Activated B cell treated with CpG ODN at 0.5 μM for 24 hours (primary cell): ENCODE measurements at regions of chr2 and their contacts with region 1.

Region 1: DNA sequence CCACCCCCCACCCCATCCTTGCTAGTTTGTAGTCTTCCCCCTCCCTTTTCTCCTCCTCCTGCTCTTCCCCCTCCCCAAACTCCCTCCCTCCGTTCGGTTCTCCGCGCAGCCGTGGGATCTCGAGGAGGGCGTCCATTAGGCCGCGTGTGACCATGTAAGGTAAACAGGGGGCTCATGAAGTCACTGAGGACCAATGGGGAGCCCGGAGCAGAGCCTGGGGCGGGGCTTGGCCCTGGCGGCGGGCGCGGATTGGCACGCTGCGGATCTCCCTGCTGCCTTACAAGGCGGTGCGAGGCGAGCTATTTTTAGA is 246 bp upstream of the KLF7 start:
- DNase-seq: peak; percentile 88
- ATAC-seq: peak; percentile 89
- H3K4me3 Mint-ChIP-seq: peak overlapping the region; percentile 95
- H3K27ac Mint-ChIP-seq: peak overlapping the region; percentile 95
- H3K4me1 Mint-ChIP-seq: peaks cover 63% of the 10 kb centered on the region
- H3K27me3 Mint-ChIP-seq: no peaks in the 10 kb centered on the region
- CTCF ChIP-seq: no peak

Region 2: DNA sequence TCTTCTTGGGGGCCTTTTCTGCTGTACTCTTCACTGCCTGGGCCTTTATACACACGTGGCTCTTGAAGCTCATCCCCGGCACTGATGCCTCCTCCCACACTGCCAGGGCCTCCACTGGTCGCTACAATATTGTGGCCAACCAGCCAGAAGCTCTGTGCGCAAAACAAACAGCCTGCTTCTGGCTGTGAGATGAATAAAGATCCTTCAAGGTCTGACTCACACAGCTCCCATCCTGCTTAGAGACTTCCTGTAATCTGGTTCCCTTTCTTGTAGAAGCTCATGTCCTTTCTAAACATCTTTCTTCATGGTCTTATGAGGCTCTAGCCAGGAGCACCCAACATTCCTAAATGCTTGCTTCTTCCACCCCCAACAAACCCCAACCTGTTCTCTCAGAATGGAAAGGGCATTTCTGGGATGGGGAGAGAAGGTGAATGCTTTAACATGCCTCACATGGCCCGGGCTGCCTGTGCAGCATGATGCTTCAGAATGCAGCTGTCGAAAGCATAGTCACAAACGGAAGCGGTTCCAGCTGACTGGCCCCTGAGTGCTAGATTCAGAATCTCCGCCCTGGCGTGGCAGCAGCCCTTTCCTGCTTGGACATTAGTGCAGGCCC is 1459.1 kb before region 1 on chr2:
- CTCF ChIA-PET with region 1: no interaction called
- POLR2A ChIA-PET with region 1: interaction called, 5 read pairs
- intact Hi-C with region 1: loop called (anchors 10 kb)
- DNase-seq: peak; percentile 60
- ATAC-seq: peak; percentile 95
- H3K4me3 Mint-ChIP-seq: peak overlapping the region; percentile 65
- H3K27ac Mint-ChIP-seq: peak overlapping the region; percentile 99
- H3K4me1 Mint-ChIP-seq: peaks cover 63% of the 10 kb centered on the region
- H3K27me3 Mint-ChIP-seq: no peaks in the 10 kb centered on the region
- CTCF ChIP-seq: no peak

Region 3: GRCh38 chr2:206765242-206766056 is 400.5 kb before region 1 on chr2 and contains the starts of genes FASTKD2 and MDH1B:
- CTCF ChIA-PET with region 1: no interaction called
- POLR2A ChIA-PET with region 1: interaction called, 18 read pairs
- intact Hi-C with region 1: loop called (anchors 1 kb)
- DNase-seq: peak; percentile 77
- ATAC-seq: peak; percentile 87
- H3K4me3 Mint-ChIP-seq: peak within 1 kb of the TSS; percentile 94
- H3K27ac Mint-ChIP-seq: peak within 1 kb of the TSS; percentile 96
- H3K4me1 Mint-ChIP-seq: peaks cover 34% of the 10 kb centered on the region
- H3K27me3 Mint-ChIP-seq: peaks cover 3% of the 10 kb centered on the region
- CTCF ChIP-seq: no peak
- total RNA-seq, gene FASTKD2: 29.1 and 29.6 TPM in 2 replicates
- total RNA-seq, gene MDH1B: not detected in 2 replicates

Region 4: DNA sequence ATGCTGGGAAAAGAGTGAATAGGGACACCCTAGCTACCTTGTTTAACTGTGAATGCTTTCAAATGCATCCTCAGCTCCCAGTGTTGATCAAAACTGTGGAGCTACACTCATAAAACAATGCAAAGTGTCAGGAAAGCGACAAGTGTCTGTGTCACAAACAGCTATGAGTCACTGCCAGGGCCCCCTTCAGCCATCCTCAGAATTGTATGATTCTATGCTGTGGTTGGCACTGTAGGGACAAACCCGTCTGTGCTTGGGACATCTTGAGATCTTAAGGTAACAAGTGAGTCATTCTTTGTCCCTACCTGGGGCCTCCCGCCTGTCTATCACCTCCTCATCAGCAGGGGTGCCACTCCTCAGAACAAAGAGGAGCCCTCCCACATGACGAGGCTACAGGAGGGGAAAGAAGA is 42.7 kb before region 1 on chr2:
- CTCF ChIA-PET with region 1: interaction called, 3 read pairs
- POLR2A ChIA-PET with region 1: interaction called, 12 read pairs
- intact Hi-C with region 1: no loop called
- DNase-seq: no peak
- ATAC-seq: peak; percentile 21
- H3K4me3 Mint-ChIP-seq: no peak overlapping the region
- H3K27ac Mint-ChIP-seq: no peak overlapping the region
- H3K4me1 Mint-ChIP-seq: peaks cover 52% of the 10 kb centered on the region
- H3K27me3 Mint-ChIP-seq: no peaks in the 10 kb centered on the region
- CTCF ChIP-seq: no peak

Region 5: DNA sequence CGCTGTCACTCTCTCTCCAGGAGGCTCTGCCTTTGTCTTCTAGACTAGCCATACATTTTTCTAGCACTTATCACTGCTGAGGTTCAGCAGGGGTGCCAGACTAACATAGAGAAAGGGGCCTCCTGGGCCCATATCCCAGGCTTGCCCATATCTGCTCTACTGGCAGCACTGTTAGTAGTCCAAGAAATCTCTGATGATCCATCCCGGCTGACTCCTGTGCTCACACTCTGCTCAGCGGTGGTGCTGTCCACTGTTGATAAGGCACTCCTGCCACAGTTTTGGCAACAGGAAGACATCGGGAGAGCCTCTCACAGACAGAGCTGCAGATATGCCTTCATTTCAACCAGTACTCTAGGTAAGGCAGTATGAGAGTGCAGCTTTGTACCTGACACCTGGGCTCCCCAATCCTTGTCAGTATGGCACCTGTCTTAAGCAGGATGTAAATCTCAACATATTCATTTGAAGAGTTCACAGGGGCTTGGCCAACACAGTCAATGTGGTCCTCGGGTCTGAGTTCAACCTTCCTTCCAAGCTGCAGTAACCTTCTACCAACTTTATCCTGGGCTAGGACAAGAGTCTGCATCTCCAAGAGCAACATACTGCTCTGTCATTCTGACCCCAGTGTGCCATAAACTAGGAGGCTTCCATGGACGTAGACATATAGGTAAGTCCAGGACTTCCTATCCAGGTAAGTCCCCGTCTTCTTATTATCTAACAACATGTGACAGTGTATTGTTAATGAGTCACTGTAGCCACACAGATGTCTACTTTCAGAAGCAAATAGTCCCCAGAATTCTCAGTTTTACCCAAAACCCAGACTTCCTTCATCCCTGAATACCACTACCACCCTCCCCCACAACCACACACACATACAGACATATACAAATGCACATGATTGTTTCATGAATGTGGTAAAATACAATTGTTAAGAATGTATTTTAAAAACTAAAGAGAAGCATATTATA is 16.5 kb before region 1 on chr2:
- CTCF ChIA-PET with region 1: interaction called, 3 read pairs
- POLR2A ChIA-PET with region 1: interaction called, 202 read pairs
- intact Hi-C with region 1: no loop called
- DNase-seq: no peak
- ATAC-seq: peak; percentile 25
- H3K4me3 Mint-ChIP-seq: peak overlapping the region; percentile 49
- H3K27ac Mint-ChIP-seq: peak overlapping the region; percentile 62
- H3K4me1 Mint-ChIP-seq: peaks cover 77% of the 10 kb centered on the region
- H3K27me3 Mint-ChIP-seq: no peaks in the 10 kb centered on the region
- CTCF ChIP-seq: no peak

Region 6: GRCh38 chr2:207473049-207473930 is 307.3 kb after region 1 on chr2:
- CTCF ChIA-PET with region 1: no interaction called
- POLR2A ChIA-PET with region 1: interaction called, 4 read pairs
- intact Hi-C with region 1: loop called (anchors 2 kb)
- DNase-seq: no peak
- ATAC-seq: no peak
- H3K4me3 Mint-ChIP-seq: no peak overlapping the region
- H3K27ac Mint-ChIP-seq: no peak overlapping the region
- H3K4me1 Mint-ChIP-seq: peaks cover 8% of the 10 kb centered on the region
- H3K27me3 Mint-ChIP-seq: no peaks in the 10 kb centered on the region
- CTCF ChIP-seq: no peak

Region 7: GRCh38 chr2:207710814-207711740 is 545.1 kb after region 1 on chr2 and contains the start of gene CCNYL1:
- CTCF ChIA-PET with region 1: no interaction called
- POLR2A ChIA-PET with region 1: interaction called, 7 read pairs
- intact Hi-C with region 1: loop called (anchors 2 kb)
- DNase-seq: peak; percentile 92
- ATAC-seq: peak; percentile 95
- H3K4me3 Mint-ChIP-seq: peak within 1 kb of the TSS; percentile 95
- H3K27ac Mint-ChIP-seq: peak within 1 kb of the TSS; percentile 85
- H3K4me1 Mint-ChIP-seq: peaks cover 23% of the 10 kb centered on the region
- H3K27me3 Mint-ChIP-seq: no peaks in the 10 kb centered on the region
- CTCF ChIP-seq: no peak
- total RNA-seq, gene CCNYL1: 12.2 and 13.5 TPM in 2 replicates